ENCODE measurements at regions of chr11 and their contacts with region 1.

Region 1: GRCh38 chr11:133403900-133404299 is 128.4 kb downstream of the OPCML start:
- DNase-seq: no peak
- H3K4me3 ChIP-seq: no peak overlapping the region
- H3K27ac ChIP-seq: no peak overlapping the region
- H3K4me1 ChIP-seq: no peaks in the 10 kb centered on the region
- H3K27me3 ChIP-seq: no peaks in the 10 kb centered on the region
- CTCF ChIP-seq: no peak
- POLR2A ChIP-seq: no peak

Region 2: GRCh38 chr11:133787379-133788141 is 383.7 kb after region 1 on chr11:
- intact Hi-C with region 1: loop called (anchors 10 kb)
- DNase-seq: no peak
- H3K4me3 ChIP-seq: peak overlapping the region; percentile 16 to 39 (median 18)
- H3K27ac ChIP-seq: no peak overlapping the region
- H3K4me1 ChIP-seq: no peaks in the 10 kb centered on the region
- H3K27me3 ChIP-seq: peaks cover 0 to 32% of the 10 kb centered on the region in 2 donors
- CTCF ChIP-seq: no peak
- POLR2A ChIP-seq: no peak

Measured in breast epithelium (tissue), 4 donors.